PC-9 (cell line): ENCODE measurements at regions of chr1 and their contacts with region 1.

Region 1: DNA sequence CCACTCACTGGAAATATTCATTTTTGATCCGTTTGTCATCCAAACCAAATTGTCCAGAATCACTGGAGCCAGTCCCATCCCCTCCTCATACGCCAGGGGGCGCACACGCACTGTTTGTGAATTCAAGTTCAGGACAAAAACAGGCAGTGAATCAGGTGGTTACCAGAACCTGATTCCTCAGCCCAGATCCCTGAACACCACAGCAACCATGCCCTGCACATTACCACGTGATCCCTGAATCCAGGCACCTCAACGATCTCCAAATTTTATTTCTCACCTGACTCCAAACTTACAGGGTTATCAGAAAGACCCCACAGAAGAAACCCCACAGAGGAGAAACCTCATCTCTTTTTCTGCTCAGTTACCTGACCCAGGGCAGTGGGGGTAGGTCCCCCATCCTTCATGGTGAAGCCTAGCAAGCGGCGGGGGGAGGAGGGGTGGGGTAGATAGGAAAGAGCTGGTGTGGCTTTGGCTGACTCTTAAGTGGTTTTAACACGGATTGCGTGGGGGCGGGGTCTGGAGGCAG is 1.4 kb upstream of the PTPRF start:
- DNase-seq: peak; percentile 64 to 82
- H3K4me3 ChIP-seq: no peak overlapping the region
- H3K27ac ChIP-seq: no peak overlapping the region
- H3K4me1 ChIP-seq: peaks cover 40% of the 10 kb centered on the region
- H3K27me3 ChIP-seq: no peaks in the 10 kb centered on the region
- CTCF ChIP-seq: peak; percentile 94

Region 2: DNA sequence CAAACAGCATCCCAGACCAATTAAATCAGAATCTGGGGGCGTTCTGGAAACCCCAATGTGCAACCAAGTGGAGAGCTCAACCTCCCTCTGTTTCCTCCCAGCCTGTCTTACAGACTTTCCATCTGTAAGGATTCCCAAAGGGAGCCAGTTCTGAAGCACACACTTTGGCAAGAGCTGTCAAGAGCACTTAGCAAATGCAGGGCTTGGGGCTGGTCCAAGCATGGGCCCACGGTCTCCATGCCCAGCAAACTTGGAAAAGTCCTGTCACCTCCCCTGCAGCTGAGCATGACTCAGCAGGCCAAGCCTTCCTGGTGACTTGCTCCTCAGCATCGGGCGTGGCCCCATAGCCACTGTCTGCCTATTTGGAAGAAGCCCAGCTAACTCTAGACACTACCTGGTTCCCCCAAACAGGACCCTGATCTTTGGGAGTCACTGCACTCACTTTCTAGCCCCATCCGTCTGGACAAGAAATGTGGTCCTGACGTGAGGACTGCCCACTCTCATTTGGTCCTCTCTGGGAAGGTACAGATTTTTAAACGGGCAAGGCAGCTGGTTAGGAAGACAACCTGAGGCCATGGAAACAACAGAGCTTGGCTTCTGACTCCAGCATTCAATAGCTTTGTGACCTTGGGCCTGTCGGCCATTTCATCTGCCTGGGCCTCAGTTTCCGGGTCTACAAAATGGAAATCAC is 587.5 kb before region 1 on chr1:
- CTCF ChIA-PET with region 1: no interaction called
- POLR2A ChIA-PET with region 1: no interaction called
- intact Hi-C with region 1: loop called (anchors 10 kb)
- DNase-seq: peak; percentile 92 to 93
- H3K4me3 ChIP-seq: peak overlapping the region; percentile 28; the same call in 1 of the 2 replicates
- H3K27ac ChIP-seq: peak overlapping the region; percentile 99
- H3K4me1 ChIP-seq: peaks cover 98% of the 10 kb centered on the region
- H3K27me3 ChIP-seq: no peaks in the 10 kb centered on the region
- CTCF ChIP-seq: no peak

Region 3: GRCh38 chr1:43466403-43466802 is 62.9 kb before region 1 on chr1:
- CTCF ChIA-PET with region 1: no interaction called
- POLR2A ChIA-PET with region 1: no interaction called
- intact Hi-C with region 1: no loop called
- DNase-seq: no peak
- H3K4me3 ChIP-seq: no peak overlapping the region
- H3K27ac ChIP-seq: no peak overlapping the region
- H3K4me1 ChIP-seq: no peaks in the 10 kb centered on the region
- H3K27me3 ChIP-seq: no peaks in the 10 kb centered on the region
- CTCF ChIP-seq: no peak

Region 4: GRCh38 chr1:43554444-43554992 is 25.2 kb after region 1 on chr1:
- CTCF ChIA-PET with region 1: interaction called, 12 read pairs
- POLR2A ChIA-PET with region 1: no interaction called
- intact Hi-C with region 1: loop called (anchors 1 kb)
- DNase-seq: peak in 1 of 2 experiments; percentile 40
- H3K4me3 ChIP-seq: no peak overlapping the region
- H3K27ac ChIP-seq: 0 out of 2 replicates have a peak overlapping the region, but pooled peaks have one; percentile 13
- H3K4me1 ChIP-seq: peaks cover 79% of the 10 kb centered on the region
- H3K27me3 ChIP-seq: no peaks in the 10 kb centered on the region
- CTCF ChIP-seq: peak; percentile 68

Region 5: GRCh38 chr1:43602990-43603389 is 73.7 kb after region 1 on chr1:
- CTCF ChIA-PET with region 1: no interaction called
- POLR2A ChIA-PET with region 1: no interaction called
- intact Hi-C with region 1: loop called (anchors 5 kb)
- DNase-seq: peak in 1 of 2 experiments; percentile 58
- H3K4me3 ChIP-seq: no peak overlapping the region
- H3K27ac ChIP-seq: no peak overlapping the region
- H3K4me1 ChIP-seq: no peaks in the 10 kb centered on the region
- H3K27me3 ChIP-seq: no peaks in the 10 kb centered on the region
- CTCF ChIP-seq: no peak

Region 6: GRCh38 chr1:43706598-43707495 is 177.6 kb after region 1 on chr1:
- CTCF ChIA-PET with region 1: no interaction called
- POLR2A ChIA-PET with region 1: interaction called, 11 read pairs
- intact Hi-C with region 1: loop called (anchors 5 kb)
- DNase-seq: peak; percentile 81 to 96
- H3K4me3 ChIP-seq: peak overlapping the region; percentile 92
- H3K27ac ChIP-seq: no peak overlapping the region
- H3K4me1 ChIP-seq: peaks cover 28% of the 10 kb centered on the region
- H3K27me3 ChIP-seq: no peaks in the 10 kb centered on the region
- CTCF ChIP-seq: no peak

Region 7: GRCh38 chr1:43836267-43836951 is 307.1 kb after region 1 on chr1:
- CTCF ChIA-PET with region 1: no interaction called
- POLR2A ChIA-PET with region 1: no interaction called
- intact Hi-C with region 1: loop called (anchors 10 kb)
- DNase-seq: peak; percentile 68 to 95
- H3K4me3 ChIP-seq: no peak overlapping the region
- H3K27ac ChIP-seq: peak overlapping the region; percentile 94
- H3K4me1 ChIP-seq: peaks cover 62% of the 10 kb centered on the region
- H3K27me3 ChIP-seq: no peaks in the 10 kb centered on the region
- CTCF ChIP-seq: no peak

Region 8: DNA sequence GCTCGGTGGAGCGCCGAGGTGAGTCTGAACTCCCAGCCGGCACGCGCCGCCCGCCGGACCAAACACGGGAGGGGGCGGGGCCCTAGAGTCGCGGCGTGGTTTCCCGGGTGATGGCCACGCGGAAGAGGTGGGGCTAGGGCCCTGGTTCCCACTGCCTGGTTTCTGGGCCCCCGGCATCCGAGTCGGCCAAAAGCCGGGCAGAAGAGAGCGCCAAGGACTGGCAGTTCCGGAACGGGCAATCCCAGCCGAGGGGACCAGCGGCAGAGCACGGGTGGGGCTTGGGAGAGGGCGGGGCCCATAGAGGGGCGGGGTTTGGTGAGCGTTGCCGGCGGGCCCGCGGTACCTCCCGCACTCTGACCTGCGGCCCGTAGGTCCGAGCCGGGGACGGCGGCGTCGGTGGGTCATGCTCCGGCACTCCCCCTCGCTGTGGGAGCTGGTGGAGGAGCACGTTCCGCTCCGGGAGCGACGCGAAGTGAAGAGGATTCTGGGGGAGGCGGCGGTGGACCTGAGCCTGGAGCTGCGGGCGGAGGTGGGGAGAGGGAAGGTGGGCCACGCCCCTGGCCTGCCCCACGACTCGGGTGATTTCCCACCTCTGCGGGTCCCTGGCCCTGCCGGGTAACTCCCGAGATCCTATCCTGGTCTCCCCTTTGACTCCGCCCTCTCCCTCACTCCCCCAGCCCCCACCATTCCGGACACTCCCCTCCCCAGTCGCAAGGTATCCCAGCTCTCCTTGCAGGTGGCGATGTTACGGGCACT is 462.4 kb after region 1 on chr1 and contains the start of gene CCDC24:
- CTCF ChIA-PET with region 1: no interaction called
- POLR2A ChIA-PET with region 1: no interaction called
- intact Hi-C with region 1: loop called (anchors 1 kb)
- DNase-seq: peak; percentile 85 to 96
- H3K4me3 ChIP-seq: peak within 1 kb of the TSS; percentile 59
- H3K27ac ChIP-seq: peak within 1 kb of the TSS; percentile 86
- H3K4me1 ChIP-seq: peaks cover 25% of the 10 kb centered on the region
- H3K27me3 ChIP-seq: no peaks in the 10 kb centered on the region
- CTCF ChIP-seq: no peak
- total RNA-seq, gene CCDC24: 47.9 and 56.5 TPM in 2 replicates